A673 (cell line): ENCODE measurements at regions of chr6 and their contacts with region 1.

Region 1: GRCh38 chr6:52233975-52234823 is 10.1 kb downstream of the IL17F start:
- DNase-seq: peak; percentile 91
- H3K4me3 ChIP-seq: no peak overlapping the region
- H3K27ac ChIP-seq: peak overlapping the region; percentile 1
- H3K4me1 ChIP-seq: peaks cover 16% of the 10 kb centered on the region
- H3K27me3 ChIP-seq: no peaks in the 10 kb centered on the region
- CTCF ChIP-seq: peak; percentile 81

Region 2: GRCh38 chr6:52098634-52099185 is 135.5 kb before region 1 on chr6:
- CTCF ChIA-PET with region 1: no interaction called
- POLR2A ChIA-PET with region 1: no interaction called
- intact Hi-C with region 1: loop called (anchors 1 kb)
- DNase-seq: peak; percentile 63
- H3K4me3 ChIP-seq: no peak overlapping the region
- H3K27ac ChIP-seq: peak overlapping the region; percentile 59
- H3K4me1 ChIP-seq: peaks cover 30% of the 10 kb centered on the region
- H3K27me3 ChIP-seq: no peaks in the 10 kb centered on the region
- CTCF ChIP-seq: peak; percentile 51

Region 3: GRCh38 chr6:52263709-52264540 is 29.7 kb after region 1 on chr6:
- CTCF ChIA-PET with region 1: no interaction called
- POLR2A ChIA-PET with region 1: no interaction called
- intact Hi-C with region 1: no loop called
- DNase-seq: peak; percentile 79
- H3K4me3 ChIP-seq: no peak overlapping the region
- H3K27ac ChIP-seq: no peak overlapping the region
- H3K4me1 ChIP-seq: no peaks in the 10 kb centered on the region
- H3K27me3 ChIP-seq: no peaks in the 10 kb centered on the region
- CTCF ChIP-seq: peak; percentile 98

Region 4: GRCh38 chr6:52307900-52308372 is 73.7 kb after region 1 on chr6:
- CTCF ChIA-PET with region 1: no interaction called
- POLR2A ChIA-PET with region 1: no interaction called
- intact Hi-C with region 1: no loop called
- DNase-seq: no peak
- H3K4me3 ChIP-seq: no peak overlapping the region
- H3K27ac ChIP-seq: no peak overlapping the region
- H3K4me1 ChIP-seq: no peaks in the 10 kb centered on the region
- H3K27me3 ChIP-seq: no peaks in the 10 kb centered on the region
- CTCF ChIP-seq: no peak

Region 5: DNA sequence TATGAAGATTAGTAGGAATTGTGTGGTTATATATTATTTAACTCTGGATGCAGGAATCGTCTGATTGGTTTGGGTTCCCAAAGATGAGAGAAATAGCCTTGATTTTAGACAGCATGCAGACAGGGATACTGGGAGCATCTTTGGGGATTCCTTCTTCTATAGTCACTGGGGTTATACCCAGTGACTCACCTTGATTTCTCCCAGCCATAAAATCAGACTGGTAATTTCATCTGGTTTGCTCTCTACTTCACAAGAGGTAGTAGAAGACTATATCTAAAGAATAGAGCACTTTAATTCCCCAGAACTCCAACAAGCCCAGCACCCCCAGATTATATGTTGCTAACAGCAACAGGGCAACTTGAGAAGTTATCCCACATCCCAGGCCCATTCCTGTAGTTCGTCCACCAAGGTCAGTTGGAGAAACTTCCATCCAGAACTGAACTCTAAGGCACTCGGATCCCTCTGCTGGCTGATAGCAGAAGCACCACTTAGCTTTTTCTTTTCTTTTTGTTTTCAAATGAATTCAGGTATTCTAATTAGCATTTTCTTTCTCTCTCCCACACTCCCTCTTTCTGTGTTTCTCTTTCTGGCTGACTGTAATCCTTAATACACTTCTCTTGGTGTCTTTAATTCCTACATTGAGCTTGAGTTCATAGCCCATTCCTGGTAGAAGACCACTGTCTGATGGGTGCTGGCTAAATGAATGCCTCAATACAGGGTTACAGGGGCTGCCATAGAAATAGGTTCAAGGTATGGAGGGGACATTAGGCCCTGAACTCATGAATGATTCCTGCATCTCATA is 165.5 kb after region 1 on chr6:
- CTCF ChIA-PET with region 1: no interaction called
- POLR2A ChIA-PET with region 1: no interaction called
- intact Hi-C with region 1: no loop called
- DNase-seq: peak; percentile 58
- H3K4me3 ChIP-seq: no peak overlapping the region
- H3K27ac ChIP-seq: no peak overlapping the region
- H3K4me1 ChIP-seq: no peaks in the 10 kb centered on the region
- H3K27me3 ChIP-seq: no peaks in the 10 kb centered on the region
- CTCF ChIP-seq: peak; percentile 87